ENCODE measurements at regions of chr16 and their contacts with region 1.

Region 1: DNA sequence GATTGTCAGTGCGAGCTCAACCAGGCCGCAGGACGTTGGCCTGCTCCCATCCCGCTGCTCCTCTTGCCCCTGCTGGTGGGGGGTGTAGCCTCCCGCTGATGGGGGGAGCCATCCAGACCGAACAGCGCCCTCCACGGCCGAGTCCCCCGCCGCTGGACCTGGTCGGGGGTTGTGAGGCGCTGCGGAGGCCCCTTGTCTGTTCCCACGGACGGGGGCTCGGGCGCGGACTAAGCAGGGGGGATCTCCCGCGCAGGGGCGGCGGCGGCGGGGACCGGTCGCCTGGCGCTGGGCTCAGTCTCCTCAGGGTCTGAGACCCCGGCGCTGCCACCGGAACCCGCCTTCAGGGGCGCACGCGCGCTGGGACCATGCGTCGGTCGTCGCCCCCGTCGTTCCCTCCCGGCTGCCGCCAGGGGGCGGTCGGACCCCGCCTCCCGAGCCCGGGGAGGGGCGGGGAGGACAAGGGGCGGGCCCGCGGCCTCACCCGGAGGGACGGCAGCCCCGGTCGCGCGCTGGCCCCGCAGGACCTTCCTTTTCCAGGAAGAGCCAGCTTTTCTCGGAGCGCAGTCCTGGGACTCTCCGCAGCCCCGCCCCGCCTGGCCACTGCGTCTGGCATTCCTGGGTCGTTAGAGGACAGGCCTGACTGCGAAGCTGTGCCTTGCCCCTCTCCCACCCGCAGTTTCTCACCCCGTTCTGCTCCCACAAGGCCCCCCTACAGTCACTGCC is 6.3 kb upstream of the IL32 start:
- DNase-seq: peak; percentile 92
- H3K4me3 Mint-ChIP-seq: peak overlapping the region; percentile 91
- H3K27ac Mint-ChIP-seq: peak overlapping the region; percentile 95
- H3K4me1 Mint-ChIP-seq: peaks cover 68% of the 10 kb centered on the region
- H3K27me3 Mint-ChIP-seq: no peaks in the 10 kb centered on the region

Region 2: DNA sequence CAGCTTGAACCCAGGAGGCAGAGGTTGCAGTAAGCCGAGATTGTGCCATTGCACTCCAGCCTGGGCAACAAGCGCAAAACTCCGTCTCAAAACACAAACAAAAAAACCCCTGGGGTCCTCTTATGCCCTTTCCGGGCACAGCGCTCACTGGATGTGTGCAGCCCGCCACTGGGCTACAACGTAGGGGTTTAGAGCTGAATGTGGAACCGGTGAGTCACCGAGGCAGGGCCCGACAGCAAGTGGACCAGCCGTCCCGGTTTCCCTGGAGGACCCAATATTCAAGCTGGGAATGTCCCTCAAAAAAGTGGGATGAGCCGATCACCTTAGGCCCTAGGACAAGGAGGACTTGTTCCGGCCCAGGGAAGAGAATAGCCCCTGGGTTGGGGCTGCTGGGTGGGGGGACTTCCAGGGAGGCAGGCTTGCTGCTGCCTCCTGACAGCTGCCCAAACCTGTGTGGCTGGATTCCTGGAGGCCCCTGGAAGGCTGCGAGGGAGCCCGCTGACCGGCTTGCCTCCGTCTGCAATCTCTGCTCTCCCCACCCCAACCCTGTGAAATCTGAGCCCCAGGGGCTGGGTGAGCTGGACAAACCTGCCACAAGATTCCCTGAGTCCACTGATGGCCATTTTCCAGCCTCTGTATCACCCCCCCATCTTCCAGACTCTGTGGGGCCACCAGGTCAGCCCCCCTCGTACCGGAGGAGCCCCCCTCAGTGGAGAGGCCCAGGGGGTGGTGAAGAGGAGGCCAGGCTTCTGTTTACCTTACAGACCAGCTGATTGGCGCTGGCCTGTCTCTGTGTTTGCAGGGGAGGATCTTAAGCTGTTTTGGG is 49.4 kb before region 1 on chr16:
- CTCF ChIA-PET with region 1: no interaction called
- POLR2A ChIA-PET with region 1: no interaction called
- intact Hi-C with region 1: no loop called
- DNase-seq: no peak
- H3K4me3 Mint-ChIP-seq: no peak overlapping the region
- H3K27ac Mint-ChIP-seq: no peak overlapping the region
- H3K4me1 Mint-ChIP-seq: peaks cover 24% of the 10 kb centered on the region
- H3K27me3 Mint-ChIP-seq: peaks cover 8% of the 10 kb centered on the region

Region 3: DNA sequence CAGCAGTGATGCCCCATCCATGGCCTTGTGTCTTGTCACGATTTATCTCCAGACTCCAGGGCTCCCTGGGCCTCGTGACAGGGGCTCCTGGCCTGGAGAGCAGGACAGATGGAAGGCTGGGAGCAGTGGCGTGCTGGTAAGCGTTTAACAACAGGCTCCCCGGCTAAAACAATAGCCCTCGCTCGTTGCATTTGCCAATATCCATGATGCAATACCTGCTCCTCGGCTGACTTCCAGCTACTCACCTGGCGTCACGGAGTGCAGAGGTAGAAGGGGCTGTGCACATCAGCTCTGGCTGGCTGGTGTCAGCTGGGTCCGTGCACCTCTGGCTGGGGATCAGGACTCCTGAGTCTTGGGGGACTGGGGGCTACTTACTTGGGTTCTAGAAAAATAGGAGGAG is 20.9 kb before region 1 on chr16:
- CTCF ChIA-PET with region 1: interaction called, 92 read pairs
- POLR2A ChIA-PET with region 1: interaction called, 4 read pairs
- intact Hi-C with region 1: no loop called
- DNase-seq: no peak
- H3K4me3 Mint-ChIP-seq: no peak overlapping the region
- H3K27ac Mint-ChIP-seq: no peak overlapping the region
- H3K4me1 Mint-ChIP-seq: peaks cover 14% of the 10 kb centered on the region
- H3K27me3 Mint-ChIP-seq: peaks cover 51% of the 10 kb centered on the region

Region 4: GRCh38 chr16:3074860-3075522 is 15.8 kb after region 1 on chr16:
- CTCF ChIA-PET with region 1: interaction called, 38 read pairs
- POLR2A ChIA-PET with region 1: interaction called, 89 read pairs
- intact Hi-C with region 1: loop called (anchors 2 kb)
- DNase-seq: peak; percentile 94
- H3K4me3 Mint-ChIP-seq: peak overlapping the region; percentile 78
- H3K27ac Mint-ChIP-seq: peak overlapping the region; percentile 99
- H3K4me1 Mint-ChIP-seq: peaks cover 89% of the 10 kb centered on the region
- H3K27me3 Mint-ChIP-seq: no peaks in the 10 kb centered on the region

Region 5: DNA sequence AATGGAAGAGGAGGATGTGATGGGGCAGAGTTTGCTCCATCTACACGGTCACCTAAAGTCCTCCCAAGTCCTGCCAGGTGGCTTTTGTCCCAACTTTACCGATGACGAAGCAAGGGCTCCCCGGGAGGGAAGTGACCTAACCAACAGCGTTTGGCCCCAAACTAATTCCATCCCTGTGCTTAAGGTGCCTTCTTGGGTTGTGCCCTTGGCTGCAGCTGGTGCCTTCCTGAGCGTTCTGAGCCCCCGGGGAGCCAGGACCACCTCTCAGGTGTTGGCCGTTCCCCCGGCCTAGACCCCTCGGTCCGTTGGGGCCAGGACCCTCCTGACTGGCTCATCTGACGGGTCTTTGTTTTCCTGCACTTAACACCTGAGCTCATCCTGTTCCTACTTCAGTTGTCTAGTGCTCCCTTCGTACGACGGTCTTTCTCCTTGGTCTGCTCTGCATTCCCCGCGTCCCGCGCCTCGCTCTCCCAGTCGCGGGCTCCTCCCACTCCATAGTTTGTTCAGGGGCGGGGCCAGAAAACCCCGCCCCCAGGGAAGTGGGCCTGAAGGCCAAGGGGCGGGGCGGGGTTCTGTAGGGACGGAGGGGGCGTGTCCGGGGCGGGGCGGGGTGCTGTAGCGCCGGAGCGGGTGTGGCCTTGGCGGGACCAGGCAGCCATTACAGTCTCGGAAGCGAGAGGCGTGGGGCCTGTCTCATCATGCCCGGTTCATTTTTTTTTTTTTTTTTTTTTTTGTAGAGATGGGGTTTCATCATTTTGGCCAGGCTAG is 40.8 kb after region 1 on chr16:
- CTCF ChIA-PET with region 1: interaction called, 10 read pairs
- POLR2A ChIA-PET with region 1: interaction called, 3 read pairs
- intact Hi-C with region 1: loop called (anchors 1 kb)
- DNase-seq: peak; percentile 97
- H3K4me3 Mint-ChIP-seq: peak overlapping the region; percentile 65
- H3K27ac Mint-ChIP-seq: peak overlapping the region; percentile 54
- H3K4me1 Mint-ChIP-seq: peaks cover 39% of the 10 kb centered on the region
- H3K27me3 Mint-ChIP-seq: no peaks in the 10 kb centered on the region

Region 6: DNA sequence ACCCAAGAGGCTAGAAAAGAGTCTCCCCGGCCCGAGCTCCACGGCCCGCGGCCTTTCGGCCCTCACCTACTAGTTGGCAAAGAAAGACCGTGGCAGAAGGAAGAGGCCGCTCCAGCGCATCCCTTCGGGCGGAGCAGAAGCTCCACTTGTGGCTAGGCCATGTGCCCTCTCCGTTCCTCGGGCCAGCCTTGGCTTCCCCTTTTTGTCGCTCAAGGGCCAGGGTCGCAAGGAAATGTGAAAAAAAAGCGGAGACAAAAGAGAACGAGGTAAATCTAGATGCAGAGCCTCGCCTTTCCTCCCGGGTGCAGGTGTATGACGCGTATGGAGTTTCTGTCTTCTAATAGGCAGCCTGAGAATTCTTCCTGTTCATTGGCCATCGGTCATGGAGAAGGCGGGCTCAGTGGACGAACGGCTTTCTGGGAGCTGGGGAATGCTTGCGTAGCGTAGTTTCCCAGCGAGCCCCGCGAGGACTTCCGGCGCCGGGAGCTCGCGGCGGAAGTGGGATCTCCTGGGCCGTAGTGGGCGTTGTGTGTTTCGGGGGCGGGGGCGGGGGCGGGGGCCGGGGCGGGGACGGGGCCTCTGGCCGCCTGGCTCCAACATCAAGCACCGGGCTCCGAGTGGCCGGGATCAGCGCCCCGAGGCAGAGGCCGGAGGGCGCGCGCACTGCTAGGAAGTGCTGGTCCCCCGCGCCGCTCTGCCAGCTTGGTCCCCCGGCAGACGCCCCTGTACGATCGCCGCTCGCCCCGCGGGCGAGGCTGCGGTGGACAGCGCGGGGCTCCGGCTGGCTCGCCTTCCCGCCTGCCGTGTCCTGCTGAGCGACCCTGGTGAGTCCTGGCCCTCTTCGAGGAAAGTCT is 75.6 kb after region 1 on chr16 and contains the start of gene ZNF213:
- CTCF ChIA-PET with region 1: interaction called, 270 read pairs
- POLR2A ChIA-PET with region 1: interaction called, 17 read pairs
- intact Hi-C with region 1: loop called (anchors 1 kb)
- DNase-seq: peak; percentile 96
- H3K4me3 Mint-ChIP-seq: peak within 1 kb of the TSS; percentile 96
- H3K27ac Mint-ChIP-seq: peak within 1 kb of the TSS; percentile 93
- H3K4me1 Mint-ChIP-seq: peaks cover 24% of the 10 kb centered on the region
- H3K27me3 Mint-ChIP-seq: no peaks in the 10 kb centered on the region
- total RNA-seq, gene ZNF213: 9.0 TPM